GM18951 (cell line): ENCODE measurements at regions of chr2 and their contacts with region 1.

Region 1: DNA sequence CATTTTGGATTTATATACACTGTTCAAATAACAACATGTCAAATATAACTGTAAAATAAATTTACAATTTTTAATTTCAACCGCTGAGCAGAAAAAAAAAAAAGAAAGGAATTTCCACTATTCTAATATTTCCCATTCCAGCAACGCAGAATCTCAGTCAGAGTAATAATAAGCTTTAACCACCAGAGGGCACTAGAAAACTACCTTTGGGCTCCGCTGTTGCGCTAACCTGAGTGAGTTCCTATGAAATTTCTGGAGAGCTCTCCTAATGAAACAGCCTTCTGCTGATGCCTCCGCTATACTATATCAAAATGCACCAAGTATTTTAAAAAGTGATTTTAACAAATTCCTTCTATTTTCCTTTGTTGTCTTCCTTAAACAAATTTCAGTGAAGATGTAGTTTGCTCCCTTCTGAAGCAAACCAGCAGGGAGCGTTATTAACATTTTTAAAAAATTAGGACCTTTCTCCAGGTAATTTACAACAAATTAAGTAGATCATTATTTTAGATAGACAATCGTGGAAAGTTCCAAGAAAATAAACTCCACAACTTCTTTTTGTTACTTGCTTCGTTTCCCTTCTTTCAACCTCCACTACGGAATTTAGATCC is 23.0 kb downstream of the ERMN start:
- POLR2A ChIP-seq: no peak

Region 2: DNA sequence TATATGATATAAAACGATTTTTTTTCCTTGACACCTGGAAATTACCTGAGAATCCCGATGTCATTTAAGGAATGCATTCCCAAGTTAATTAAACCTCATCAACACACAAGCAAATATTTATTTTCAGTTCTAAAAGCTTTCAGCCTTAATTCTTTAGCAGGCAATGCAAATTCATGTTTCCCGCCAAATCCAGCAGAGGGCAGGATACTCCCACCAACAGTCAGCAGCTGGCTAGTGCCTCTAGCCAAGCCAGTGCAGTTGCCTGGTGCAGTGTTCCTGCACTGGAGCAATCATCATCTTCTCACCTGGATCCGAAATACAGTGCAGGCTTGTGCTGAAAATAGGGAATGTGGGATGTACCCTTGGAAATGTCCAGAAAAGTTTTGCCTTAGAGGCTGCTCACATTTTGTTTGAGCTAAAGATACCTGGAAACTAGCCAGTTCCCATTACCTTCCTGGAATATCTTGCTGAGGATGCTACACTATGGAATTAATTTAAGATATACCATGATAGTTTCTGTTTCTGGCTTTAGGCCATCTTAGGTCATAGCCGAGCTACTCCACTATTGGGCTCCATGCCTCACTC is 189.7 kb after region 1 on chr2:
- in situ Hi-C with region 1: loop called (anchors 10 kb)
- POLR2A ChIP-seq: no peak

Region 3: DNA sequence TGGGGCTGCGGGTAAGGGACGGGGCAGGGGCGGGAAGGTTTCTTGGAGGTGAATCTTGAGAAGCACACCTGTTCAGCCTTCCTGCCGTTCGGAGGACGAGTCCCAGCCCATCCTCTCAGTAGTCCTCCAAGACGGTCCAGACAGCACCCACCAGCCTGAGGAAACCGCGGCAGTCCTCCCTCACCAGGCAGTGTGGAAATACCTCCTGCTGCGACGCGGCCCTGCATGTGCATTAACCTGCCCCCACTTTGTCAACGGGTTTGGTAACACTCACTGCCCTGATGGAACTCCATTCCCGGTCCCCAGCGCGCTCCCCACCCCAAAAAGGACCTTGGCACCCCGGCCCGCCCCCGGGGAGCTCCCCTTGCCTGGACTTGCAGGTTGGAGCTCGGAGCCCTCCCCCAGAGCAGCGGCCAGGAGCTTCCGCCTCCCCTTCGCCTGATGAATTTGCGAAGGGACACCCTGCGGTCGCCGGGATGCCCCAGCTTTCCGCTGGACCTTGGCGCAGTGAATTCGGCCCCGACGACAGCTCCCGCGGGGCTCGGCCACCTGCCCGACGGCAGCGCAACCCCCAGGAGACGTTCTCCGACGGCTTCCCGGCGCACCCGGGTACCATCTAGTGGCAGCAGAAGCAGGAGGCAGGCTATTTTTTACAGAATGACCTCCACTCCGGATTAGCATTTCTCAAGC is 294.5 kb after region 1 on chr2:
- in situ Hi-C with region 1: loop called (anchors 25 kb)
- POLR2A ChIP-seq: no peak

Region 4: GRCh38 chr2:158094487-158095092 is 792.0 kb after region 1 on chr2:
- in situ Hi-C with region 1: no loop called
- POLR2A ChIP-seq: no peak